ENCODE measurements at regions of chr11 and their contacts with region 1.

Region 1: DNA sequence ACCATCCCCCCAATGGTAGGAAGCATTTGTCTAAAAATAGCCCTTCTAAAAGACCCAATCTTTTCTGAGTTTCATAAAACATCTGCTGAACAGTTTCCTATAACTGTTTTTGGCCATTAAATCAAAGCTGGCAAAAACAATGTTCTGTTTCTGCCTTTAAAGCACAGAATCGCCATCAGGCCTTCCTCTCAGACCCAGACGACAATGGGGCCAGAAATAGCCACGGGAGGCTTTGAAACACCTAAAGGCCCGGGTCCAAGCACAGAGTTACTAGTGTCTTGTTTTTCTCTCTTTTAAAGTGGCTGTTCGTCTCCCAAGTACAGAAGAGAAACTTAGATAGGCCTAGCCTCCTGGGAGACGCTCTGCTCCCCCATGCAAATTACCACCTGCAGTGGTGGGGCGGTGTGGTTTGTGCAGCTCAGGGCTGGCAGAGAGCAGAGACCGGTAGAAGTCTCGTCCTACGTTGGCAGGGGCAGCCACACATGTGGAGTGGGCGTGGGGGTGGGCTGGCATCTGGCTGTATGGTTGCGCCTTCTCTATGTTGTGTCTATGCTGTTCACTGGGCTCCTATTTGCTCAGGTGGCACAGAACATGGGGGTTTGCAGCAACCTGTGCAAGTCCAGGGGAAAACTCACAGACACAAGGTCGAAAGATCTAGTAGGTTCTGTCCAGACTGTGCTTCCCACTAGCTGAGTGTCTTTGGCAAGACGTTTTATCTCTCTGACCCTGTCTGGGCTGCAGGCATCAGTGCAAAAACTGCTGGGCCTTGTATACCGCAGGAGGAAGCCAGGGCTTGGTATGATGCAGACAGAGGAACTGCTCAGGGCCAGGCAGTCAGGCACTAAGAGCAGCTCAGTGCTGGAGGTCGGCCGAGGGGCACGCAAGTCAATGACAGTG is 23.6 kb upstream of the ETS1 start:
- DNase-seq: peak; percentile 75
- ATAC-seq: peak; percentile 83
- H3K4me3 Mint-ChIP-seq: peak overlapping the region; percentile 67
- H3K27ac Mint-ChIP-seq: peak overlapping the region; percentile 92
- H3K4me1 Mint-ChIP-seq: peaks cover 59% of the 10 kb centered on the region
- H3K27me3 Mint-ChIP-seq: no peaks in the 10 kb centered on the region
- CTCF ChIP-seq: no peak

Region 2: DNA sequence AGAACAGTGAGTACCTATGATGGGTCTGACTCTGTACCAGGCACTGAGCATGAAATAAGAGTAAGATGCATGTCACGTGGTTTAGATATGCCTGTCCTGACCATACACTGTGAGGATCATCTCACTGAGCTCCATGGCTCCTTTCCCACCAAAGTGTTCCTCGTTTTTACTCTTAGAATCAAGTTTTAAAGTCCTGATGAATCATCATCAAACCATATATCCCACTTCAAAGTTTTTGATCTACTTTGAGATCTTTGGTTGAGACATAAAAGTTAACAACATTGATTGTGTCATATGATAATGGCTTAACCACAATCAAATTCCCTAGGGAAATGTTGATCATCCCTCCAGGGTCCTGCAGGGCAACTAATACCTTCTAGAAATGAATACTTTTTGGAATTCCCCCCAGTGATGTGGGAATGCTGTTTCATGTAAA is 36.4 kb before region 1 on chr11:
- CTCF ChIA-PET with region 1: no interaction called
- POLR2A ChIA-PET with region 1: no interaction called
- intact Hi-C with region 1: no loop called
- DNase-seq: no peak
- ATAC-seq: peak; percentile 62
- H3K4me3 Mint-ChIP-seq: no peak overlapping the region
- H3K27ac Mint-ChIP-seq: no peak overlapping the region
- H3K4me1 Mint-ChIP-seq: peaks cover 37% of the 10 kb centered on the region
- H3K27me3 Mint-ChIP-seq: no peaks in the 10 kb centered on the region
- CTCF ChIP-seq: no peak

Region 3: GRCh38 chr11:128599729-128600128 is 11.2 kb before region 1 on chr11:
- CTCF ChIA-PET with region 1: interaction called, 11 read pairs
- POLR2A ChIA-PET with region 1: interaction called, 3 read pairs
- intact Hi-C with region 1: no loop called
- DNase-seq: no peak
- ATAC-seq: peak; percentile 38
- H3K4me3 Mint-ChIP-seq: no peak overlapping the region
- H3K27ac Mint-ChIP-seq: no peak overlapping the region
- H3K4me1 Mint-ChIP-seq: peaks cover 53% of the 10 kb centered on the region
- H3K27me3 Mint-ChIP-seq: no peaks in the 10 kb centered on the region
- CTCF ChIP-seq: no peak

Region 4: GRCh38 chr11:128624269-128625175 is 13.6 kb after region 1 on chr11:
- CTCF ChIA-PET with region 1: interaction called, 10 read pairs
- POLR2A ChIA-PET with region 1: interaction called, 9 read pairs
- intact Hi-C with region 1: no loop called
- DNase-seq: peak; percentile 77
- ATAC-seq: peak; percentile 57
- H3K4me3 Mint-ChIP-seq: peak overlapping the region; percentile 56
- H3K27ac Mint-ChIP-seq: peak overlapping the region; percentile 94
- H3K4me1 Mint-ChIP-seq: peaks cover 97% of the 10 kb centered on the region
- H3K27me3 Mint-ChIP-seq: no peaks in the 10 kb centered on the region
- CTCF ChIP-seq: no peak